ENCODE measurements at regions of chr9 and their contacts with region 1.

Region 1: GRCh38 chr9:113398796-113399195 is 2.3 kb downstream of the ALAD start:
- DNase-seq: no peak
- ATAC-seq: no peak

Region 2: DNA sequence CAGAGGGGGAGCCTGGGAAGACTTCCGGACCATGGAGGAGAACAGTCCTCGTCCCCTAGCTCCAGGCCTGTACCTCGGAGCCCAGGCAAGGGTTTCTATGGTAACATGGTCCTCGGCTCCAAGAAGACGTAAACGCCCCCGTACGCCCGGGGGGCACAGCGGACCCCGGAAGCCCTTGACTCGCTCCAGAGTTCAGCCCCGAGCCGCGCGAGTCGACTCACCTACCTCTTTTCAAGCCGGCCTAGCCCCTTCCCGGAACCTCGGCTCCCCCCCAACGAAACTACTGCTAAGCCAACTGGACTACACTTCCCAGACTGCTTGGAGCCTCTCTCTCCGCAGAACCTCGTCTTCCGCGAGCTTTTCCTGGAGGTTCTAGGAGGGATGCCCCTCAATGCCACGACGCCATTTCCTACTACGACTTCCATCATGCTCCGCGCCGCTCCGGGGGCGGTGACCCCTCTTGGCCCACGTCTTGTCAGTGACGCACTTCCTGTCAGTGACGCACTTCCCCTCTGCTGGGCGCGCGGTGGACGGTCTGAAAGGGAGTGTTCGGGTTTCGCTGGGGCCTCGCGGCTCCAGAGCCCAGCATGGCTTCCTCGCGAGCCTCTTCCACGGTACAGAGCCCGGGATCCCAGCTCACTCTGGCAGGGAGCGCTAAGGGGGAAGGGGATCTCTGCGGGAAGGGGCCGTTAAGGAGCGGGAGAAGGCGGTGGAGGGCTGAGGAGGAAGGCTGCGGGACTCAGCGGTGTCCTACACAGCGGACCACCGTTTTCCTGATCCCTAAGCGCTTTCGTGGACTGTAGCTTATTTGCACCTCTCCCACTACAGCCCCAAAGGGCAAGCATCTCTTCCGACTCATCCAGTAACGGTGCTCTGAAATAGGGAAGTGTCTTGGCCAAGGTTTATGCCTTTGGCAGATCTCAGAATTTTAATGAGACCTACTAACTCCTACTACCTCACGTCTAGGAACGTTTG is 123.4 kb before region 1 on chr9 and contains the starts of genes CDC26 and PRPF4:
- intact Hi-C with region 1: loop called (anchors 2 kb)
- DNase-seq: peak; percentile 98
- ATAC-seq: peak; percentile 99
- total RNA-seq, gene CDC26: 28.2 TPM
- total RNA-seq, gene PRPF4: 16.3 TPM